ENCODE measurements at regions of chr3 and their contacts with region 1.

Region 1: GRCh38 chr3:132641837-132642538 is 17.6 kb downstream of the ACAD11 start:
- DNase-seq: peak in 4 of 5 donors; percentile 21 to 41 (median 35)
- H3K4me3 ChIP-seq: no peak overlapping the region
- H3K4me3 Mint-ChIP-seq: no peak overlapping the region
- H3K27ac ChIP-seq: no peak overlapping the region
- H3K27ac Mint-ChIP-seq: no peak overlapping the region
- H3K4me1 ChIP-seq: no peaks in the 10 kb centered on the region
- H3K4me1 Mint-ChIP-seq: peaks cover 0 to 2% (median 0%) of the 10 kb centered on the region in 4 donors
- H3K27me3 ChIP-seq: no peaks in the 10 kb centered on the region
- H3K27me3 Mint-ChIP-seq: no peaks in the 10 kb centered on the region

Region 2: DNA sequence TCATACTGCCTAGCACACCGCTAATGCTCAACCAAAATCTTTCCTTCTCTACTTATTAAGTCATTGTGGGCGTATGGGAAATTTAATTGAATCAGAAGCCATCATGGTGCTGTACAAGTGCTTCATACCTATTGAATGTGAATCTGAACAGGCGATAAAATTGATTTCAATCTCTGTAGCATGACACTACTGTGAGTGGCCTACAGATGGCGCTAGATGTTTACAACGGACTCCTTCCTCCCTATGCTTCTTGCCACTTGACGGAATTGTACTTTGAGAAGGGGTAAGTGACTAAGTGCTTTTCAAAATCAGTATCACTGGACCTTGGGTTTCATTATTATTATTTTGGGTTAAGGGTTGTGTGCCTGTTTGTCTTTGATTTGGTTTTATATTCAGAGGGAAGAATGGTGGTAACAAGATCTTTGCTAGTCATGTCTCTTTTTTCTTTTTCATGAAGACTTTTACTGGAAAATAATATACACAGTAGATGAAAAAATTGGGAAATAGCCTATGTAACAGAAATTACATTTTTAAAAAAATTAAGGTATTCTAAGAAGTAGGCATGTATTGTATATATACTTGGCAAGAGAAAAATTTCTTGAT is 289.3 kb before region 1 on chr3:
- CTCF ChIA-PET with region 1: interaction called, 43 read pairs
- POLR2A ChIA-PET with region 1: no interaction called
- intact Hi-C with region 1: loop called (anchors 1 kb)
- DNase-seq: peak; percentile 53 to 67 (median 60)
- H3K4me3 ChIP-seq: no peak overlapping the region
- H3K4me3 Mint-ChIP-seq: no peak overlapping the region
- H3K27ac ChIP-seq: no peak overlapping the region
- H3K27ac Mint-ChIP-seq: peak overlapping the region in 1 of 7 donors; percentile 60
- H3K4me1 ChIP-seq: no peaks in the 10 kb centered on the region
- H3K4me1 Mint-ChIP-seq: peaks cover 0 to 4% (median under 1%) of the 10 kb centered on the region in 4 donors
- H3K27me3 ChIP-seq: no peaks in the 10 kb centered on the region
- H3K27me3 Mint-ChIP-seq: peaks cover 3 to 10% of the 10 kb centered on the region in 2 donors

Region 3: DNA sequence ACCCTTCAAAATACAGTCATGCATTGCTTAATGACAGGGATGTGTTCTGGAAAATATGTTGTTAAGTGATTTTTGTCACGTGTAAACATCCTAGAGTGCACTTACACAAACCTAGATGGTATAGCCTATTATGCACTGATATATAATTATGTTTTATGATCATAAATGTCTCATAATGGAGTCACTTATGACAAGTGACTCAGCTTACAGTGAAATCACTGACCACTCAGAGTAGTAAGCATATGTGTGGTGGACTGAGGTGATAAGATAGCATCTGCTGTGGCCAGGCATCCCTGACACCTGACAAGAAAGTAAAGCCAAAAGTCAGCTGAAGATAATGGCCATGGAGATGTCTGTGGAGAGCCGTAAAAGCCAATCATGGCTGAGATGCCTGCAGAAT is 12.2 kb after region 1 on chr3:
- CTCF ChIA-PET with region 1: interaction called, 11 read pairs
- POLR2A ChIA-PET with region 1: interaction called, 4 read pairs
- intact Hi-C with region 1: no loop called
- DNase-seq: no peak
- H3K4me3 ChIP-seq: no peak overlapping the region
- H3K4me3 Mint-ChIP-seq: no peak overlapping the region
- H3K27ac ChIP-seq: no peak overlapping the region
- H3K27ac Mint-ChIP-seq: no peak overlapping the region
- H3K4me1 ChIP-seq: peaks cover 20% of the 10 kb centered on the region
- H3K4me1 Mint-ChIP-seq: peaks cover 17 to 27% (median 23%) of the 10 kb centered on the region in 4 donors
- H3K27me3 ChIP-seq: no peaks in the 10 kb centered on the region
- H3K27me3 Mint-ChIP-seq: no peaks in the 10 kb centered on the region

Region 4: GRCh38 chr3:134600685-134601463 is 1958.9 kb after region 1 on chr3:
- CTCF ChIA-PET with region 1: no interaction called
- POLR2A ChIA-PET with region 1: no interaction called
- intact Hi-C with region 1: no loop called
- DNase-seq: peak in 4 of 5 donors; percentile 31 to 43 (median 38)
- H3K4me3 ChIP-seq: no peak overlapping the region
- H3K4me3 Mint-ChIP-seq: peak overlapping the region in 6 of 8 donors; percentile 1 to 68 (median 42)
- H3K27ac ChIP-seq: no peak overlapping the region
- H3K27ac Mint-ChIP-seq: no peak overlapping the region
- H3K4me1 ChIP-seq: no peaks in the 10 kb centered on the region
- H3K4me1 Mint-ChIP-seq: peaks cover 4 to 11% (median 6%) of the 10 kb centered on the region in 4 donors
- H3K27me3 ChIP-seq: no peaks in the 10 kb centered on the region
- H3K27me3 Mint-ChIP-seq: peaks cover 2 to 11% of the 10 kb centered on the region in 2 donors